Aorta (tissue), 5 donors: ENCODE measurements at regions of chr19 and their contacts with region 1.

Region 1: DNA sequence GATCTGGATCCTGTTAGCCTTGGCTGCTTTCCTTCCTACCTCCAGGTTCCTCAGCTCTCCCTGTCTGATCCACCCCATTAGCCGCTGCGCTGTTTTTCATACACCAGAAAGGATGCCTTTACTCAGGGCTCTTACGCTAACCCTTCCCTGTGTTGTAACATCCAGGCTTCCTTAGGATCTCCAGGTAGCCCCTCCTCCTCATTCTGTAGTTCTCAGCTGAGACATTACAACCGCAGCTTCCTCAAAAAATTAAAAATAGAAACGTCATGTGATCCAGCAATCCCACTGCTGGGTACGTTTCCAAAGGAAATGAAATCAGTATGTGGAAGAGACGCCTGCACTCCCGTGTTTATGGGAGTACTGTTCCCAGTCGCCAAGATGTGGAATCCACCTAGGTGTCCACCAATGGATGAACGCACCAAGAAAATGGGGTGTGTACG is 18.4 kb upstream of the MYADM start:
- DNase-seq: no peak
- ATAC-seq: peak; percentile 19
- H3K4me3 ChIP-seq: no peak overlapping the region
- H3K27ac ChIP-seq: no peak overlapping the region
- H3K4me1 ChIP-seq: no peaks in the 10 kb centered on the region
- H3K27me3 ChIP-seq: no peaks in the 10 kb centered on the region

Region 2: GRCh38 chr19:53879140-53880081 is 30.2 kb after region 1 on chr19:
- intact Hi-C with region 1: no loop called
- DNase-seq: peak; percentile 95 to 98
- ATAC-seq: peak; percentile 97
- H3K4me3 ChIP-seq: peak overlapping the region; percentile 2 to 44
- H3K27ac ChIP-seq: no peak overlapping the region
- H3K4me1 ChIP-seq: peaks cover 0 to 3% of the 10 kb centered on the region in 2 donors
- H3K27me3 ChIP-seq: no peaks in the 10 kb centered on the region

Region 3: DNA sequence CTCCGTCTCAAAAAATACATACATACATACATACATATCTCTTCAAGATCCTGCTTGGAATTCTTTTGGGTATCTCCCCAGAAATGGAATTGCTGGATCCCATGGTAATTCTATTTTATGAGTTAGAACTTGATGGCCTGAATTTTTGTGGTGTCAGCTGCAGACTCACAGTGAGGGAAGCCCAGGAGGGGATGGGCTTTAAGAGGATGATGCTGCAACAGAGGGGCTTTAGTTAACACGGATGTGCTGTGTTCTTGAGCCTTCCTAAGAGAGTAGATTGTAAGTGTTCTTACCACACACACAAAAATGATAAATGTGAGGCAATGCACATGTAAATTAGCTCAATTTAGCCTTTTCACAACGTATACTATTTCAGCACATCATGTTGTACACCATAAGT is 173.9 kb after region 1 on chr19:
- intact Hi-C with region 1: loop called in 1 of 2 experiments (anchors 5 kb)
- DNase-seq: no peak
- ATAC-seq: no peak
- H3K4me3 ChIP-seq: no peak overlapping the region
- H3K27ac ChIP-seq: no peak overlapping the region
- H3K4me1 ChIP-seq: no peaks in the 10 kb centered on the region
- H3K27me3 ChIP-seq: no peaks in the 10 kb centered on the region

Region 4: GRCh38 chr19:54102421-54103169 is 253.3 kb after region 1 on chr19 and contains the start of gene NDUFA3:
- intact Hi-C with region 1: loop called in 1 of 2 experiments (anchors 10 kb)
- DNase-seq: peak; percentile 99
- ATAC-seq: peak; percentile 100
- H3K4me3 ChIP-seq: peak within 1 kb of the TSS; percentile 13 to 47
- H3K27ac ChIP-seq: no peak within 1 kb of the TSS
- H3K4me1 ChIP-seq: peaks cover 0 to 2% of the 10 kb centered on the region in 2 donors
- H3K27me3 ChIP-seq: no peaks in the 10 kb centered on the region
- total RNA-seq, gene NDUFA3: 64.9 to 65.3 TPM